Stomach (tissue), 19 donors: ENCODE measurements at regions of chr9 and their contacts with region 1.

Region 1: DNA sequence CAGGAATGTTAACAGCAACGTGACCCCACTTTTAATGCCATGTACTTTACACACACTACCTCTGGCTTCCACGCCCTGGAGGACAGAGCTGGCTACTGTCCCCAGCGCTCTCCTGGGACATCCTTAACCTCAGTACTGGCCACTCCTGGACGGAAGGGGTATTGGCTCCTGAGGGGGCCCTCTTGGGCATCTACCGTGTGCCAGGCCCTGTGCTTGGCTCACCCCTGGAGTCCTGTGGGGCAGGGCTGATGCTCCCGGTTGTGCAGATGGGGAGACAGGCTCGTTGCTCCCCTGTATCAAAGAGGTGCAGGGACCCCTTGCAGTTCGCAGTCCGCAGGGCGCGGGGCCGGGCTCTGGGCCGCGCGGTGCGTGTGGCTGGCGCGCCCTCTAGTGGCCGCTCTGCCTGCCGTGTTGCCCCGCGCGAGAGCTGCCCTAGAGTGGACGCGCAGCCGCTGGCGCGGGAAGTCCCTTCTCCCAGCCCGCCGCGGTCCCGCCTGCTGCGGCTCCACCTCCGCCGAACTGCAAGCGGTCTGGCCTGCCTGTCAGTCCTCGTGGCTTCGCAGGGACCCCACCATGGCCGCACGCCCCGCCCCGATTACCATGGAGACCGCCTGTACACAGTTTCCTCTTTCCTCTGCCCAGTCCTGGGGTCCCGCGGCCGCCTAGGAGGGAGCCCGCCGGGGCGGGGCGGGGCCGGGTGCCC is at the start of gene WDR38:
- DNase-seq: peak; percentile 78 to 91
- H3K4me3 ChIP-seq: peak within 1 kb of the TSS; percentile 43 to 58 (median 46)
- H3K27ac ChIP-seq: peak within 1 kb of the TSS in 4 of 5 donors; percentile 27 to 73 (median 35)
- H3K4me1 ChIP-seq: peaks cover 10 to 19% (median 16%) of the 10 kb centered on the region in 4 donors
- H3K27me3 ChIP-seq: peaks cover 0 to 3% (median 0%) of the 10 kb centered on the region in 3 donors
- CTCF ChIP-seq: peak in 5 of 7 experiments; percentile 89 to 99 (median 98)
- EP300 ChIP-seq: no peak
- POLR2A ChIP-seq: no peak
- total RNA-seq, gene WDR38: not detected

Region 2: DNA sequence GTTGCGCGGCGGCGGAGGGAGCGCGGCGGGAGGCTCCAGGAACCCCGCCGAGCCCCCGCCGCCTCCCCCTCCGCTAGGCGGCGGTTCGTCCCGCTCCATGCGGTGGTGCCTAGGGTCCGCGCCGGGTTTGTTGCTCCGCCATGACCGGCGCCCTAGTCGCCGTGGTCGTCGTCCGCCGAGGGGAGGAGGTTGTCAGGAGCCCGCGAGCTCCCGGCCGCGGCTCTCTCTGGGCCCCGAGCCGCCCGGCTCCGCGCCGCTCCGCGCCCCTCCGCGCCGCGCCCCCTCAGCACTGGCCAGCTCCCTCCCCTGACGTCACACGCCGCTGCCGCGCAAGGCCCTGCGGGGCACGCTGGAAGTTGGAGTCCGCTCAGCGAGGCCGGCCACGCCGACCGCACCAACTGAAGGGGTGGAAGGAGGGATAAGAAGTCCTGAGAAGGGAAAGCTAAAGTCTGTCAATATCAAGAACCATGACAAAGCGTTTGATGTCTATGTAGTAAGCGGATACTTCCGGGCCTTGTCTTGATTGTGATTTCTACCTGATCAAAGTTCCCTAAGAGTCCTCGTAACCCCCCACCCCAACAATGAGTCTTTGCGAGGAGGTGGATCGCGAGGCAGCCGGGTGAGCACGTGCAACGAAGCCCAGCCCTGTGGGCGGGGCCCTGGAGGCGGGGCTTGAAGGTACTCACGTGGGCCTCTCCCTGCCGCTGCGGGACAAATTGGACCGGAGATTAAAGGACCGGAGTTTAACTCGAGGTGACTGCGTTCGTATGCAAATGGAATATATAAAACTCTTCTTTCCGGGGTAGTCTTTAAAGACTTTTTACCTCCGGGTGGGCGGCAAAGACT is 81.7 kb before region 1 on chr9 and contains the start of gene NR6A1:
- intact Hi-C with region 1: loop called (anchors 5 kb)
- DNase-seq: peak; percentile 98 to 99
- H3K4me3 ChIP-seq: peak within 1 kb of the TSS; percentile 83 to 98 (median 93)
- H3K27ac ChIP-seq: peak within 1 kb of the TSS; percentile 62 to 80 (median 70)
- H3K4me1 ChIP-seq: peaks cover 17 to 41% (median 29%) of the 10 kb centered on the region in 4 donors
- H3K27me3 ChIP-seq: peaks cover 5 to 58% (median 38%) of the 10 kb centered on the region in 3 donors
- CTCF ChIP-seq: peak in 2 of 7 experiments; percentile 11 to 36
- EP300 ChIP-seq: no peak
- POLR2A ChIP-seq: no peak
- total RNA-seq, gene NR6A1: 1.5 to 3.2 (median 2.9) TPM in 4 of 5 donors, not detected in the other

Region 3: GRCh38 chr9:124894741-124895170 is 41.8 kb after region 1 on chr9:
- intact Hi-C with region 1: no loop called
- DNase-seq: peak in 1 of 2 donors; percentile 59
- H3K4me3 ChIP-seq: no peak overlapping the region
- H3K27ac ChIP-seq: no peak overlapping the region
- H3K4me1 ChIP-seq: no peaks in the 10 kb centered on the region
- H3K27me3 ChIP-seq: no peaks in the 10 kb centered on the region
- CTCF ChIP-seq: peak in 1 of 7 experiments; percentile 6
- EP300 ChIP-seq: no peak
- POLR2A ChIP-seq: no peak